ENCODE measurements at regions of chr2 and their contacts with region 1.

Region 1: GRCh38 chr2:8334866-8335325 is 347.0 kb upstream of the ID2 start:
- DNase-seq: peak in 3 of 14 experiments; percentile 30 to 37 (median 31)
- ATAC-seq: no peak
- H3K4me3 ChIP-seq: no peak overlapping the region
- H3K4me3 Mint-ChIP-seq: no peak overlapping the region
- H3K27ac ChIP-seq: peak overlapping the region in 1 of 2 donors; percentile 9
- H3K27ac Mint-ChIP-seq: no peak overlapping the region
- H3K4me1 ChIP-seq: peaks cover 34% of the 10 kb centered on the region
- H3K4me1 Mint-ChIP-seq: peaks cover 25% of the 10 kb centered on the region
- H3K27me3 ChIP-seq: no peaks in the 10 kb centered on the region
- H3K27me3 Mint-ChIP-seq: no peaks in the 10 kb centered on the region
- CTCF ChIP-seq: no peak

Region 2: DNA sequence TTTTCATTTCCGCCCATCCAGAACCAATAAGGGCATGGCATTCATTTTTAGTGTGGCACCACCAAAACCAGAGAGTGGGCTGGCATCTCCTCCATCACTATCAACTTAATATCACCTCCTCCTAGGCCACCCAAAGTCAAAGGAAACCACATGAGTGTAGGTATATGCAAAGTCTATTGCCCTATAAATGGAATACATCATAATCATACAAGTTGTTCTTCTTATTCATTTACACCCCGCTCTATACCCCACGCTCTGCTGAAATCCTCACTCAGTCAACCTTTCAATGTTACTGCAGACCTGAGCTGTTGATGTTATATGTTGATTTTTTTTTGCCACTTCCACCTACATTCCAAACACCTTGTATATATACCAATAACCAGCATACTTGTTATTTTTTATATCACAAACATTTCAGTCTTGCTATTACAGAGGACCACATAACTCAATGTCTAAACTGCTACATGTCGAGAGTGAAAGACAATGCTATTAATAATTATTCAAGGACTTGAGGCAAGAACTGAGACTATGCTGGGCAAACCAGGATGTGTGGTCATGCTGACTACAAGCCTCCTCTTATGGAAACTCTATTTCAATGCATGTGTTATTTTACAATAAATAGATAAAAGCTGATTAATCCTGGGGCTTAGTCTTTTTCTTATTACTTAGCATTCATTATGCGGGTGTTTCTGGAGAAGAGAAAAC is 119.6 kb before region 1 on chr2:
- CTCF ChIA-PET with region 1: no interaction called
- POLR2A ChIA-PET with region 1: no interaction called
- intact Hi-C with region 1: no loop called
- DNase-seq: no peak
- ATAC-seq: no peak
- H3K4me3 ChIP-seq: no peak overlapping the region
- H3K4me3 Mint-ChIP-seq: no peak overlapping the region
- H3K27ac ChIP-seq: no peak overlapping the region
- H3K27ac Mint-ChIP-seq: no peak overlapping the region
- H3K4me1 ChIP-seq: peaks cover 3% of the 10 kb centered on the region
- H3K4me1 Mint-ChIP-seq: no peaks in the 10 kb centered on the region
- H3K27me3 ChIP-seq: no peaks in the 10 kb centered on the region
- H3K27me3 Mint-ChIP-seq: no peaks in the 10 kb centered on the region
- CTCF ChIP-seq: no peak

Region 3: GRCh38 chr2:8285081-8285480 is 49.8 kb before region 1 on chr2:
- CTCF ChIA-PET with region 1: no interaction called
- POLR2A ChIA-PET with region 1: no interaction called
- intact Hi-C with region 1: loop called in 1 of 2 experiments (anchors 5 kb)
- DNase-seq: no peak
- ATAC-seq: no peak
- H3K4me3 ChIP-seq: no peak overlapping the region
- H3K4me3 Mint-ChIP-seq: no peak overlapping the region
- H3K27ac ChIP-seq: no peak overlapping the region
- H3K27ac Mint-ChIP-seq: no peak overlapping the region
- H3K4me1 ChIP-seq: peaks cover 6% of the 10 kb centered on the region
- H3K4me1 Mint-ChIP-seq: no peaks in the 10 kb centered on the region
- H3K27me3 ChIP-seq: no peaks in the 10 kb centered on the region
- H3K27me3 Mint-ChIP-seq: no peaks in the 10 kb centered on the region
- CTCF ChIP-seq: no peak

Region 4: DNA sequence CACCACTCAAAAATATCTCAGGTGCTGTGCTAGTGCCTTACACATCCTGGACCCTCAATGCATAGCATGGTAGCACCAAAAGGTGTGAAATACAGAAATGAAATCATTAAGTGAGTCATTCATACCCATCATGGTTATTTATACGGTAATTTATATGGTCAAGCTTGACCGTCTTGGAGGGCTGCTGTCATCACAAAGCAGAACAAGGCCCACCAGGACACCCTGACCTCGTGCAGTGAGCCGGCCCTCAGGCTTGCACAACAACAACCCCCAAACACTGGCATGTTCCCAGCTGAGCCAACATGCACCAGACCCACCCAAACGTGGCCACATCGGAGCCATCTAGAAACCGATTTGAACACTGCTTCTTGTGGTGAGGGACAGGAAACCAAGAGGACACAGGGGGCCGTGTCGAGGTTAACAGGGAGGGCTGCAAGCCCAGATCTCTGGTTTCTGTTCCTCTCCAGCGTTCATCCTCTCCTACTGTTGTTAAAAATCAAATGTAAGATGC is 31.5 kb before region 1 on chr2:
- CTCF ChIA-PET with region 1: no interaction called
- POLR2A ChIA-PET with region 1: no interaction called
- intact Hi-C with region 1: loop called in 1 of 2 experiments (anchors 5 kb)
- DNase-seq: peak in 13 of 14 experiments; percentile 49 to 88 (median 60)
- ATAC-seq: peak; percentile 46
- H3K4me3 ChIP-seq: peak overlapping the region; percentile 9
- H3K4me3 Mint-ChIP-seq: peak overlapping the region; percentile 18
- H3K27ac ChIP-seq: no peak overlapping the region
- H3K27ac Mint-ChIP-seq: no peak overlapping the region
- H3K4me1 ChIP-seq: peaks cover 71% of the 10 kb centered on the region
- H3K4me1 Mint-ChIP-seq: peaks cover 32% of the 10 kb centered on the region
- H3K27me3 ChIP-seq: no peaks in the 10 kb centered on the region
- H3K27me3 Mint-ChIP-seq: no peaks in the 10 kb centered on the region
- CTCF ChIP-seq: no peak

Region 5: GRCh38 chr2:8357738-8358518 is 23.0 kb after region 1 on chr2:
- CTCF ChIA-PET with region 1: no interaction called
- POLR2A ChIA-PET with region 1: no interaction called
- intact Hi-C with region 1: no loop called
- DNase-seq: peak in 1 of 14 experiments; percentile 18
- ATAC-seq: no peak
- H3K4me3 ChIP-seq: no peak overlapping the region
- H3K4me3 Mint-ChIP-seq: no peak overlapping the region
- H3K27ac ChIP-seq: no peak overlapping the region
- H3K27ac Mint-ChIP-seq: no peak overlapping the region
- H3K4me1 ChIP-seq: peaks cover 4% of the 10 kb centered on the region
- H3K4me1 Mint-ChIP-seq: no peaks in the 10 kb centered on the region
- H3K27me3 ChIP-seq: no peaks in the 10 kb centered on the region
- H3K27me3 Mint-ChIP-seq: no peaks in the 10 kb centered on the region
- CTCF ChIP-seq: no peak

Region 6: GRCh38 chr2:8491296-8492027 is 156.6 kb after region 1 on chr2:
- CTCF ChIA-PET with region 1: no interaction called
- POLR2A ChIA-PET with region 1: no interaction called
- intact Hi-C with region 1: no loop called
- DNase-seq: peak in 1 of 14 experiments; percentile 4
- ATAC-seq: no peak
- H3K4me3 ChIP-seq: no peak overlapping the region
- H3K4me3 Mint-ChIP-seq: no peak overlapping the region
- H3K27ac ChIP-seq: no peak overlapping the region
- H3K27ac Mint-ChIP-seq: no peak overlapping the region
- H3K4me1 ChIP-seq: peaks cover 41% of the 10 kb centered on the region
- H3K4me1 Mint-ChIP-seq: peaks cover 35% of the 10 kb centered on the region
- H3K27me3 ChIP-seq: no peaks in the 10 kb centered on the region
- H3K27me3 Mint-ChIP-seq: no peaks in the 10 kb centered on the region
- CTCF ChIP-seq: no peak